Head of caudate nucleus (tissue), 42 donors: ENCODE measurements at regions of chr17 and their contacts with region 1.

Region 1: GRCh38 chr17:29140051-29140621 is 40.1 kb downstream of the MYO18A start:
- DNase-seq: peak in 41 of 42 donors; percentile 51 to 89 (median 77)

Region 2: DNA sequence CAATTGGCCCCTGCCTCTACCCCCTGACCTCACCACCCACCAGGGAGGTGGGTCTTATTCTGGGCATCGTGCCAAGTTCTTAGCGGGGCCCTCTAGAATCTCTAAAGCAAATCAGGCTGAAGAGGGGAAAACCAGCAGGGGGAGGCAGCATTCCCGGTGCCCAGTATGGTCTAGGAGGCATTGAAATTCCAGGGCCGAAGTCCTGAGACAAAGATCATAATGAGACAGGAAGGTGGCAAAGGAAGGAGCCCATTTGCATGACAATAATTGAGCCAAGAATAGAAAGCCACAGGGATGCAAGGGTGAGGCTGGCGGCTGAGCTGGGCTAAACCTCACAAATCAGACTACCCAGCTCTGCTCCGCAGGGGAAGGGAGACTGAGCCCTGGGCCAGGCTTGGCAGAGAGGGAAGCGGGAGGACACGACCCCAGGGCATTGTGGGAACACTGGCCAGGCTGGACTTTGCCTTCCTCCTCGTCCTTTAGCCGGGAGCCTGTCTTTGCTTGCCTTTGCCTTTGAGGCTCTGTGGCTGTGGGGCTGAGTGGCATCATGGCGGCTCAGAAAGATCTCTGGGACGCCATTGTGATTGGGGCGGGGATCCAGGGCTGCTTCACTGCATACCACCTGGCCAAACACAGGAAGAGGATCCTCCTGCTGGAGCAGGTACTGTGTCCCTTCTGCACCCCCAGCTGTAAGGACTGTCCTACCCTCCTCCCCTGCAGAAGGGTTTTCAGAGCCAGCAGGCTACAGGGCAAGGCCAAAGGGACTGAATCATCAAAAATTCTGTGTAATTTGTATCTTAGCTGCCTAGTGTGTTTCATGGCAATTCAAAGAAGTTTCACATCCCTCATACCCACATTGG is 97.2 kb before region 1 on chr17 and contains the start of gene PIPOX:
- intact Hi-C with region 1: no loop called
- DNase-seq: peak in 33 of 42 donors; percentile 5 to 74 (median 41)

Region 3: DNA sequence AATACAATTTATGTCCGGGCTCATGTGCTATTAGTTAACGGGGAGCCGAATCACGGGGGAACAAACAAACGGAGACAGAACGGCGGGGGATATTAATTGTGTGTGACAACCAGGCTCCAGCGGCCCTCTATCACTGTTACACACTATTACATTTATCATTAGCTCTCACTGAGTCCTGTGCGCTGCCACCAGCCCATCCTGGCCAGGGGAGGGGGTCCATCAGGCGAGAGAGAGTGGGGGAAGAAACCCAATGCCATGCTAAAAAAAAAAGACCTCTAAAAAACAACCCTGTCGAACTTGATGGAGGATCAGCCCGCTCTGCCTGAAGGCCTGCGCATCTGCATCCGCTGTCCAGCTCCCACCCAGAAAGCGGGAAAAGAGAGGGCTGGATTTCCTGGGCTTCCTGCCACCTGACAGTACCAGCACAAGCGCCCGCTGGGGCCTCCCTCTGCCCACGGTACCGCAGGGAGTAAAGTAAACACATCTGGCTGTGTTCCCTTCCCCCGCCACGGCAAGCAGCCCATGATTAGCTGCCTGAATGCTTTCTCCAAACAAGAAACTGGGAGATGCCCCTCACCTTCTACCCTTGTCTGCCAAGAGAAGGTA is 55.5 kb before region 1 on chr17:
- intact Hi-C with region 1: no loop called
- DNase-seq: peak in 1 of 42 donors; percentile 33

Region 4: DNA sequence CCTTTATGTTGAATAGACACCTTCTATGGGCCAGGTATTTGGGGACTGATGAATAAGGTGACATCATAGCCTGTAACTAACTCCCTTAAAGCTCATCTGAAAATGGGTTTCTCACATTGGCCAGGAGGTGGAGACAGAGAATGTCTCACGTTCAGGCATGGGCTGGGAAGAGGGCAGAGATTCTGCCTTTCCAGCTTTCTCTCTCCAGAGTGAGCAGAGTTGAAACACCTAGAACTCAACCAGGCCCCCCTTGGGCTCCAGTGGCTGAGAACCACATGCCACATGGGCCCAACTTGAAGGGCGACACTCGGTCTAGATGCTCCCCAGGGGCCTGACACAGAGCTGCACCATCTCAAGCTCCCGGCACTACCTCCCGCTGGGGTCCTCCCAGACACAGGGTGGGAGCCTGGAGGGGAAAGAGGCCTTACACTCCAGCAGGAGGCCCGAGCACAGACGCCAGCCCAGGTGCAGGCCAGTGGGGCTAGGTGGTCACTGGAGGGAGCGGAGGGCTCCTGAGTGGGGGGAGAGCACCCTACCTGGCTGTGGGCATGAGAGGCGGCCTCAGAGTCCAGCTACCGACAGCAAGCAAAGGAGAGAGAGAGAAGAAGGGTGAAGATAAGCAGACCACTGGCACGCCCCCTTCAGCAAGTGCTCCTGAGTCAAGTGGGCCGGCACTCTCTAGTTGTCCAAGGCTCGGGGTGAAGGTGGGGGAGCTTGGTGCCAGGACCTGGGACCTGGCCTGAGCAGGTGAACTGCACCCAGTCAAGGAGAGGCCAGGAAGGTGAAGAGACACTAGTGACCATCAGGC is 15.8 kb before region 1 on chr17:
- intact Hi-C with region 1: loop called (anchors 2 kb)
- DNase-seq: peak in 32 of 42 donors; percentile 36 to 84 (median 68)